ENCODE measurements at regions of chr17 and their contacts with region 1.

Region 1: DNA sequence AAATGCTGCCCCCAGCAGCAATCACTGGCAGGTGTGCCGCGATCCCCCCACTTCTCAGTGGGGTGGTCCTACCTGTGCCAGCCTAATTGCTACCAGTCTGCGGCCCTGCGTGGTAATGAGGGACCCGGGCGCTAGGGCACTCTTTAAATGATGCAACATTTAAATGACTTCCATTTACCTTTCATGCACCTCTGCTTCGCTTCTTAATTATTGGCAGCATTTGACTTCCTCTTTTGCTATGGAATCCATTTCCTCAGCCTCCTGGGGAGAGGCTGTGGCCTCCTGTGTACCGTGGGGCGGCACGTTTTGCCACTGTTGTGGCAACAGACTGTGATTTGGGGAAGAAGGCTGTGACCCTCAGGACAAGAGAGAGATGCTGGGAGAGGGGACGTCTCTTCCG is 86.1 kb downstream of the RPA1 start:
- ATAC-seq: no peak
- H3K4me3 ChIP-seq: no peak overlapping the region
- H3K27ac ChIP-seq: peak overlapping the region; percentile 77 to 82
- H3K4me1 ChIP-seq: peaks cover 41 to 51% of the 10 kb centered on the region in 2 donors

Region 2: GRCh38 chr17:2029911-2030778 is 114.3 kb after region 1 on chr17 and contains the start of gene DPH1:
- in situ Hi-C with region 1: loop called in 6 of 9 experiments (anchors 10 to 25 kb)
- ATAC-seq: peak; percentile 77 to 87 (median 86)
- H3K4me3 ChIP-seq: peak within 1 kb of the TSS; percentile 81 to 99 (median 87)
- H3K27ac ChIP-seq: peak within 1 kb of the TSS; percentile 71 to 74
- H3K4me1 ChIP-seq: peaks cover 16 to 24% of the 10 kb centered on the region in 2 donors
- total RNA-seq, gene DPH1: 15.3 to 113 (median 29.0) TPM

Measured in motor neuron (in vitro differentiated cells).